Uterus (tissue), 4 donors: ENCODE measurements at regions of chr16 and their contacts with region 1.

Region 1: DNA sequence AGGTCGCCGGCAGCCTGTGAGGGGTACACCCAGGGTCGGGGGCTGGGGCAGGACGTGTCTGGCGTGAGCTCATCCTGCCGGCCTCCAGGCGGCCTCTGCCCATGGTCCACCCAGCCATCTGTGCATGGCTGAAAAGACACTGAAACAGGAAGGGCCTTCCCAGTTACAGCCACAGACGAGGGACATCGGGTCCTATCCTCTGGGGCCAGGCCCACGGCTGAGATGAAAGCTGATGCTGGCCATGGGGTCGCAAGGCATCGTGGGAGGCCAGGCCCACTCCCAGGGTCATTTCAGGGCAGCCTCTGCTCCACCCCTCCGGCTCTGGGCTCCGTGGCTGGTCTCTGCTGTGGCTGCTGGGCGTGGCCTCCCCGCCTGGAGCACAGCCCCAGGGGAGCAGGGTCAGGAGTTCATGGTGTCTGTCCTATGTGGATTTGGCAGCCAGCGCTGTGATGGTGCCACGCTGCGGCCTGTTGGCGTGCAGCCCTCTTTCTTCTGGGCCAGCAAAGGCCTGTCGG is 16.6 kb upstream of the ATP6V0C start:
- DNase-seq: no peak
- H3K4me3 ChIP-seq: no peak overlapping the region
- H3K27ac ChIP-seq: no peak overlapping the region
- H3K4me1 ChIP-seq: peaks cover 0 to 7% of the 10 kb centered on the region in 2 donors
- H3K27me3 ChIP-seq: no peaks in the 10 kb centered on the region
- CTCF ChIP-seq: no peak
- POLR2A ChIP-seq: no peak

Region 2: DNA sequence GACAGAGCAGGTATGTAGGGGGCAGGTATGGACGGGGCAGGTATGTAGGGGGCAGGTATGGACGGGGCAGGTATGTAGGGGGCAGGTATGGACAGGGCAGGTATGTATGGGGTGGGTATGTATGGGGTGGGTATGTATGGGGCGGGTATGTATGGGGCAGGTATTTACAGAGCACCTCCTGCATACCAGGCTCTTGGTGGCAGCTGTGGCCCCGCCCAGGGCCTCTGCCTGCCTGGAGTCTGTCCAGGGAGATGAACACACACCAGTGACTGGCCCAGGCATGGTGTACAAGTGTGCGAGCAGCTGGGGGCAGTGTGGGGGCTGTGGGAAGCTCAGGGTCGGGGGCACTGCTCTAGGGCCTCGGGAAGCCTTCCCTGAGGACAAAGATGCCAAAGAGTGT is 547.1 kb before region 1 on chr16:
- intact Hi-C with region 1: no loop called
- DNase-seq: no peak
- H3K4me3 ChIP-seq: no peak overlapping the region
- H3K27ac ChIP-seq: no peak overlapping the region
- H3K4me1 ChIP-seq: no peaks in the 10 kb centered on the region
- H3K27me3 ChIP-seq: no peaks in the 10 kb centered on the region
- CTCF ChIP-seq: no peak
- POLR2A ChIP-seq: no peak

Region 3: GRCh38 chr16:2339521-2340484 is 157.4 kb before region 1 on chr16:
- intact Hi-C with region 1: loop called (anchors 10 kb)
- DNase-seq: peak; percentile 40 to 43
- H3K4me3 ChIP-seq: peak overlapping the region; percentile 36 to 65
- H3K27ac ChIP-seq: peak overlapping the region in 1 of 2 donors; percentile 40
- H3K4me1 ChIP-seq: no peaks in the 10 kb centered on the region
- H3K27me3 ChIP-seq: no peaks in the 10 kb centered on the region
- CTCF ChIP-seq: no peak
- POLR2A ChIP-seq: no peak

Region 4: GRCh38 chr16:2537453-2538379 is 40.5 kb after region 1 on chr16 and contains the start of gene PDPK1:
- intact Hi-C with region 1: no loop called
- DNase-seq: peak; percentile 92 to 96
- H3K4me3 ChIP-seq: peak within 1 kb of the TSS; percentile 61 to 66
- H3K27ac ChIP-seq: peak within 1 kb of the TSS; percentile 80 to 89
- H3K4me1 ChIP-seq: peaks cover 7 to 10% of the 10 kb centered on the region in 2 donors
- H3K27me3 ChIP-seq: no peaks in the 10 kb centered on the region
- CTCF ChIP-seq: no peak
- POLR2A ChIP-seq: peak; percentile 21 to 56
- total RNA-seq, gene PDPK1: 11.0 to 66.2 (median 23.9) TPM

Region 5: DNA sequence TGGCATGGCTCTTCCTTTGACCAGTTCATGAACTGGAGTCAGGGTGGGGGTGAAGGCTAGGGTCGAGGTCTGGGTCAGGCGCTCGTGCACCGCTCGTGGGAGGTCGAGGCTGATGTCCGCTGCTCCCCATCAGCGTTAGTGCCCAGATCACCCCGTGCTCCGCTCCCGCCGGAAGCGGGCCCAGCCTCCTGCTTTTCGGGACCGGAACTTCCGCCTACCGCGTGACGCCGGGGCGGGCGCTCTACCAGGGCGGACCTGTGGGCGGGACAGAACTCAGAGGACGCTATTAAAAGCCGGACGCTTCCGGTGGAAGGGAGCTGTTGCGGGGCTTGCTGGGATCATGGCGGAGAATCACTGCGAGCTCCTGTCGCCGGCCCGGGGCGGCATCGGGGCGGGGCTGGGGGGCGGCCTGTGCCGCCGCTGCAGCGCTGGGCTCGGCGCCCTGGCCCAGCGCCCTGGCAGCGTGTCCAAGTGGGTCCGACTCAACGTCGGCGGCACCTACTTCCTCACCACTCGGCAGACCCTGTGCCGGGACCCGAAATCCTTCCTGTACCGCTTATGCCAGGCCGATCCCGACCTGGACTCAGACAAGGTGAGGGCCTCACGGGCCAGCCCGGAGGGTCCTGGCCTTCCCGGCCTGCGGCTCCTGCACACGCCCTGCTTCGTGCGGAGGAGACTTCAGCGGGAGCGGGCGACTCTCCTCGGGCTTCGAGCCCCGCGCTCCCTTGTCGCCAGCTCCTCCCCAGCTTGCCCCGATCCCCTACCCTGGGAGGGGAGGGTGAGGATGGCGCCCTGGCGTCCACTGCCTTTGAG is 185.2 kb after region 1 on chr16 and contains the start of gene KCTD5:
- intact Hi-C with region 1: no loop called
- DNase-seq: peak; percentile 95 to 97
- H3K4me3 ChIP-seq: peak within 1 kb of the TSS; percentile 67 to 96
- H3K27ac ChIP-seq: peak within 1 kb of the TSS; percentile 66 to 81
- H3K4me1 ChIP-seq: no peaks in the 10 kb centered on the region
- H3K27me3 ChIP-seq: no peaks in the 10 kb centered on the region
- CTCF ChIP-seq: peak in 2 of 4 experiments; percentile 30 to 44
- POLR2A ChIP-seq: peak; percentile 83 to 84
- total RNA-seq, gene KCTD5: 4.6 to 21.6 (median 12.7) TPM